ENCODE measurements at regions of chr12 and their contacts with region 1.

Region 1: DNA sequence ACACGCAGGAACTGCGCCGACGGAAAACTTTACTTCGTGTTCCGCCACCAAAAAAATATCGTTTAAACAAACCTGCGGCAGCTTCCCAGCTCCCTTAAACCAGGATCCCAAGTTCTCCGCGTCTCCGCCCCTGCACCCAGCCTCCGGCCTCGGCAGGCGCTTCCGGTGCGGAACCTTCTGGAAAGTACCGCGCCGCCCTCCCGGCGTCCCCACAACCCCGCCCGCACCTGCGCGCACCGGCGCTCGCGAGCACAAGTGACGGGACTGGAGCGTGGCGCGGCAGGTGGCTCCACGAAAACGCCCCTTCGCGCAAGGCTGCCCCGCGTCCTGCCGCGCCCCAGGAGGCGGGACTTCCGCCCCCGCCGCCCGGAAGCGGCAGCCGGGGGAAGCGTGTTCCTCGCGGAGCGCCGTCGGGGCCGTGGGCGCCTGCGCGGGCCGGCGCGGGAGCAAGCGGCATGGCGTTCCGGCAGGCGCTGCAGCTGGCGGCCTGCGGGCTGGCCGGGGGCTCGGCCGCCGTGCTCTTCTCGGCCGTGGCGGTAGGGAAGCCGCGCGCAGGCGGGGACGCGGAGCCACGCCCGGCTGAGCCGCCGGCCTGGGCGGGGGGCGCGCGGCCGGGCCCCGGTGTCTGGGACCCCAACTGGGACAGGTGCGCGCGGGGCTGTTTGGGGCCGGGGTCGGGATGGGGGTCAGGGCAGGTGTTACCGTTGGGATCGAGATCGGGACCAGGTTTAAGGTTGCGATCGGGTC is at the start of gene PGAM5:
- DNase-seq: peak; percentile 92
- H3K4me3 Mint-ChIP-seq: peak within 1 kb of the TSS; percentile 82
- H3K27ac Mint-ChIP-seq: peak within 1 kb of the TSS; percentile 71
- H3K4me1 Mint-ChIP-seq: peaks cover 25% of the 10 kb centered on the region
- H3K27me3 Mint-ChIP-seq: no peaks in the 10 kb centered on the region
- total RNA-seq, gene PGAM5: 32.5 to 35.1 TPM

Region 2: GRCh38 chr12:132470978-132471857 is 239.4 kb before region 1 on chr12:
- CTCF ChIA-PET with region 1: no interaction called
- POLR2A ChIA-PET with region 1: no interaction called
- DNase-seq: no peak
- H3K4me3 Mint-ChIP-seq: no peak overlapping the region
- H3K27ac Mint-ChIP-seq: no peak overlapping the region
- H3K4me1 Mint-ChIP-seq: peaks cover 28% of the 10 kb centered on the region
- H3K27me3 Mint-ChIP-seq: peaks cover 23% of the 10 kb centered on the region

Region 3: DNA sequence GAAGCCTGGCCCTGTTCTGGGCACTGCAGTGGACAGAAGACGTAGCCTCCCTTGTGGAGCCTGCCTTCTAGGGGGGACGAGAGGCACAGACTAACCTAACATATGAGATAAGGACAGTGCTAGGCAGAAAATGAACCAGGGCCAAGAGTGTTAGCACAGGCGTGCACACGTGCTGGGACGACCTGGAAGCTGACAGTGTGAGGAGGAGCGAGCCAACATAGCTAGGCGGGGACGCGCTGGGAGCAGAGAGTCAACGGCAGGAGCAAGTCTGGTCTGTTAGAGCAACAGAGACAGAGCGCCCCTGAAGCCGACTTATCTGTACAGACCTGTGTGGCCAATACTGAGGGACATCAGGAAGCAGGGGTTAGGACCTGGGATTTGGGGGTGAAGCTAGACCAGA is 15.2 kb before region 1 on chr12:
- CTCF ChIA-PET with region 1: no interaction called
- POLR2A ChIA-PET with region 1: interaction called, 11 read pairs
- DNase-seq: no peak
- H3K4me3 Mint-ChIP-seq: no peak overlapping the region
- H3K27ac Mint-ChIP-seq: no peak overlapping the region
- H3K4me1 Mint-ChIP-seq: no peaks in the 10 kb centered on the region
- H3K27me3 Mint-ChIP-seq: no peaks in the 10 kb centered on the region

Measured in activated CD4-positive, alpha-beta memory T cell treated with anti-CD3 and anti-CD28 coated beads, Interleukin-2, amount 10 ng/mL, durations not matched to agents 7 days and 5 days (primary cell).